BJ (cell line): ENCODE measurements at regions of chr1 and their contacts with region 1.

Region 1: DNA sequence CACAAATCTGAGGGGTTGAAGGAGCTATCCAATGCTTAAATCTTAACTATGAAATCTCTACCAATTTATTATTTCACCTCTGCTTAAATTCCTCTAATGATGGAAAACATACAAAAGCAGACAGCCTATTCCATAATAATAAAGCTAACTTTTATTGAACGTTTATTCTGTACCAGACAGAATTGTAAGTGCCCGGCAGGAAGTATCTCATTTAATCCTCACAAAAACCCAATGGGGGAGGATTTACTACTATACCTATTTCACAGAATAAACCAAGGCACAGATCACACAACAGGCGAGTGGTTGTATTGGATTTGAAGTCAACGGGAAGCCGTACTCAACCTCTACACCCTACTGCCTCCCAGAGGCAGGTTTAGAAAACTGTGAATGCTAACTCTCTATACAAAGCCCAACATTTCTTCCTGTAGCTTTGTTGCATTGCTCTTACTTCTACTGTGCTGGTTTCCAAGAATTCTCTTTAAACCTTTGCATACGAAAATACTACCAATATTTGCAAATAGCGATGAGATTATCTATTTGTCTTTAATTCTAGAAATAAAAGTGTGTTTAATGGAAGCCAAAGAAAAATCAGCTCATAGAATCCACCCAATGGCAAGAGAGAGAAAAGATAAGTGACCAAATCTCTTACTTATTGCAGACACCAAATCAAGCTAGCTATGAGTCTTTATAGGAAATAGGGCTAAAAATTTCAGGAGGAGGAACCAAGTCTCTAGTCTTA is 33.5 kb upstream of the C1orf53 start:
- DNase-seq: peak; percentile 11
- H3K4me3 ChIP-seq: no peak overlapping the region
- H3K27me3 ChIP-seq: no peaks in the 10 kb centered on the region
- CTCF ChIP-seq: peak; percentile 78

Region 2: DNA sequence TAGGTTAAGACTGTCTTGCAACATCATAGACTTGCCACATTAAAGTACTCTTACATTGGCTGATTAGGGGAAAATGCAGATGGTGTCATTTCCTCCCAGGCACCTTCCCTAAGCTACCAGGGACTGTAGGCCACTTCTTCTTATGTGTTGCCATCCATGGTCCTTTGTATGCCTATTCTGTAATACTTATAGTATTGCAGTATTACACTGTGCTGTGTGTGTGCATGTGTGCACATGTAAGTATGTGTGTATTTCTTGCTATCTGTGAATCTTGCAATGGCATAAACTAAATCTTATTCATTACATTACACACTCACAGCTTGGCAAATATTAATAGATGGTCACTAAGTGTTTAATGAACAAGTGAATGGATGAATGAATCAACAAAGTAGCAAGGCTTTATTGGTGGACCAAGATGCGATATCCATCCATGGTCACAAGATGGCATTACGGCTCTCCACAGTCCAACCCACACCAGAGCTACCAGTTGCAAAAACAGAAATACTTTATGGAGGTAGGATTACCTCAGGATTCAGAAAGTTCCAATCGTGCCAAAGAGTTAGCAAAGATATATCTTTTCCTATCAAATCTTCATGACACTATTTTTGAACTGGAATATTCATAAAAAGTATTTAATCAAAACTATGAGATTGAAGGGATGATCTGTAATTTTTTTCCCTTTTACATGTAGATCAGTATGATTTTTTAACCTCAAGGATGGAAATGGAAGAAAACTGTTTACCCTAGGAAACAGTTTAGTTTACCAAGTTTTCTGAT is 253.8 kb before region 1 on chr1:
- CTCF ChIA-PET with region 1: interaction called, 27 read pairs
- POLR2A ChIA-PET with region 1: no interaction called
- DNase-seq: peak; percentile 1
- H3K4me3 ChIP-seq: no peak overlapping the region
- H3K27me3 ChIP-seq: no peaks in the 10 kb centered on the region
- CTCF ChIP-seq: peak; percentile 75

Region 3: GRCh38 chr1:197692965-197693364 is 176.0 kb before region 1 on chr1:
- CTCF ChIA-PET with region 1: interaction called, 15 read pairs
- POLR2A ChIA-PET with region 1: no interaction called
- DNase-seq: no peak
- H3K4me3 ChIP-seq: no peak overlapping the region
- H3K27me3 ChIP-seq: no peaks in the 10 kb centered on the region
- CTCF ChIP-seq: peak; percentile 31; the same call in 1 of the 2 replicates

Region 4: GRCh38 chr1:197783510-197783948 is 85.4 kb before region 1 on chr1:
- CTCF ChIA-PET with region 1: interaction called, 10 read pairs
- POLR2A ChIA-PET with region 1: no interaction called
- DNase-seq: peak; percentile 37
- H3K4me3 ChIP-seq: no peak overlapping the region
- H3K27me3 ChIP-seq: no peaks in the 10 kb centered on the region
- CTCF ChIP-seq: no peak

Region 5: DNA sequence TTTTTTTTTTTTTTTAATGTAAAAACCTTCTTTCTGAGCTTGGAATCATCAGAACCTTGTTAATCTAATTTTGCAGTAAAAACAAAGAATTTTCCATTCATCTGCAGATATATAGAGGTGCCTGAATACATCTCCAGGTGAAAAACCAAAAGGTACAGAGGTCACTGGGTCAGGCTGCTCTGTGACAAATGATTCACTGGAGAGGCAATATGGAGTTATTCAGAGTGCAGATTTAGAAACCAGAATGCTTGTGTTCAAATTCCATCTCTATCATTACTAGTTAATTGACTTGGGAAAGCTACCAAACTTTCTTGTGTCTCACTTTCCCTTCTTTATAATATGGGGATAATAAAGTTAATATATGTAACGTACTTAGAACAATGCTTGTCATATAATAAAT is 18.0 kb before region 1 on chr1:
- CTCF ChIA-PET with region 1: no interaction called
- POLR2A ChIA-PET with region 1: no interaction called
- DNase-seq: no peak
- H3K4me3 ChIP-seq: no peak overlapping the region
- H3K27me3 ChIP-seq: no peaks in the 10 kb centered on the region
- CTCF ChIP-seq: no peak

Region 6: GRCh38 chr1:197884173-197884572 is 15.3 kb after region 1 on chr1:
- CTCF ChIA-PET with region 1: interaction called, 12 read pairs
- POLR2A ChIA-PET with region 1: no interaction called
- DNase-seq: no peak
- H3K4me3 ChIP-seq: no peak overlapping the region
- H3K27me3 ChIP-seq: no peaks in the 10 kb centered on the region
- CTCF ChIP-seq: no peak

Region 7: GRCh38 chr1:197937892-197938291 is 69.0 kb after region 1 on chr1:
- CTCF ChIA-PET with region 1: no interaction called
- POLR2A ChIA-PET with region 1: no interaction called
- DNase-seq: no peak
- H3K4me3 ChIP-seq: no peak overlapping the region
- H3K27me3 ChIP-seq: no peaks in the 10 kb centered on the region
- CTCF ChIP-seq: no peak